ENCODE measurements at regions of chr13 and their contacts with region 1.

Region 1: DNA sequence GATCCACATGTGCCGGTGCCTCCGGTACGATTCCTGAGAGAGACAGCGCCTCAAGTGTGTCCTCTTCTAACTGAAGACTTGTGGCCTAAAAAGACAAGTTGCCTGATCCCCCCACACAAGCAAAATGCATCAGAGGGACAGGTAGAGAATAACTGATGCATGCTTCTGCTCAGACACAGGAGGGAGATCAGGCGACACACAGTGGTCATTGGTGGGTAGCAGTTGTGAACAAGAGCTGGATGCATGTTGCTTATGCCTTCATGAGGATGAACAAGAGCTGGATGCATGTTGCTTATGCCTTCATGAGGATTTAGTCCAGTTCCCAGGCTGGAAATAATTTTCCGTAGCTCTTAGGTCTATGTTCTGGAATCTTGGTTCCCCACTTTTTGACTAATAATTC is 505.6 kb downstream of the MYO16 start:
- DNase-seq: no peak
- H3K4me3 ChIP-seq: no peak overlapping the region
- H3K27ac ChIP-seq: no peak overlapping the region
- H3K4me1 ChIP-seq: peaks cover 0 to 12% (median 1%) of the 10 kb centered on the region in 4 experiments; a peak in 2 of 7 replicates
- H3K27me3 ChIP-seq: no peaks in the 10 kb centered on the region
- CTCF ChIP-seq: peak; percentile 29 to 51 (median 46); a peak in 3 of 4 replicates
- EP300 ChIP-seq: no peak
- POLR2A ChIP-seq: no peak
- RAD21 ChIP-seq: peak; percentile 53 to 57

Region 2: DNA sequence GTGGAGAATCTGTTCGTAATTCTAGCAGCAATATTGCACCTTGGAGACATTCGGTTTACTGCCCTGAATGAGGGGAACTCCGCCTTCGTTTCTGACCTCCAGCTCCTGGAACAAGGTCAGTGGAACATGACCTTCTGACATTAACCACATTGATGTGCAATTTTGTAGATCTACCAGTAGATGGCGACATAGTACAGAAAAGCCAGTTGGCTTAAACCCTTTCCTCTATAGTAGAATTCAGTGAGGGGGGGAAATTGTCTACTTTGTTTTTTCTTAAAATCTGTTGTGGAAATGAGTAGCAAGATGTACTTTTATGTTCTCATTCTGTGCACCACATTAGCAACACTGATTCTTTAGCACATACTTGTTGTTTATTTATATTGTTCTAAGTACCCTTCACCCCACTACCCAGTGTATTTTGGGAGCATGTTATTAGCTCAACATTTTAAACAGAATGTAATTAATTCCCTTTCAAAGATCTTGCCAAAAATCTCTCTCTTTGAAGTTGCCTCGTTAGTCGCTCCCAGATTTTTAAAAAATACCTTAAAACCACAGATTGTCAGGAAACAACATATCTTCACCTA is 173.4 kb before region 1 on chr13:
- CTCF ChIA-PET with region 1: interaction called, 14 read pairs
- POLR2A ChIA-PET with region 1: no interaction called
- DNase-seq: no peak
- H3K4me3 ChIP-seq: no peak overlapping the region
- H3K27ac ChIP-seq: no peak overlapping the region
- H3K4me1 ChIP-seq: no peaks in the 10 kb centered on the region
- H3K27me3 ChIP-seq: no peaks in the 10 kb centered on the region
- CTCF ChIP-seq: peak in 2 of 3 experiments; percentile 64 to 80; a peak in 2 of 4 replicates
- EP300 ChIP-seq: no peak
- POLR2A ChIP-seq: no peak
- RAD21 ChIP-seq: peak; percentile 94 to 96

Region 3: GRCh38 chr13:109160357-109160756 is 25.3 kb after region 1 on chr13:
- CTCF ChIA-PET with region 1: no interaction called
- POLR2A ChIA-PET with region 1: no interaction called
- DNase-seq: no peak
- H3K4me3 ChIP-seq: no peak overlapping the region
- H3K27ac ChIP-seq: no peak overlapping the region
- H3K4me1 ChIP-seq: peaks cover 0 to 7% (median 3%) of the 10 kb centered on the region in 4 experiments; a peak in 5 of 7 replicates
- H3K27me3 ChIP-seq: no peaks in the 10 kb centered on the region
- CTCF ChIP-seq: no peak
- EP300 ChIP-seq: no peak
- POLR2A ChIP-seq: no peak
- RAD21 ChIP-seq: no peak

Measured in H1 (cell line).